ENCODE measurements at regions of chr1 and their contacts with region 1.

Region 1: DNA sequence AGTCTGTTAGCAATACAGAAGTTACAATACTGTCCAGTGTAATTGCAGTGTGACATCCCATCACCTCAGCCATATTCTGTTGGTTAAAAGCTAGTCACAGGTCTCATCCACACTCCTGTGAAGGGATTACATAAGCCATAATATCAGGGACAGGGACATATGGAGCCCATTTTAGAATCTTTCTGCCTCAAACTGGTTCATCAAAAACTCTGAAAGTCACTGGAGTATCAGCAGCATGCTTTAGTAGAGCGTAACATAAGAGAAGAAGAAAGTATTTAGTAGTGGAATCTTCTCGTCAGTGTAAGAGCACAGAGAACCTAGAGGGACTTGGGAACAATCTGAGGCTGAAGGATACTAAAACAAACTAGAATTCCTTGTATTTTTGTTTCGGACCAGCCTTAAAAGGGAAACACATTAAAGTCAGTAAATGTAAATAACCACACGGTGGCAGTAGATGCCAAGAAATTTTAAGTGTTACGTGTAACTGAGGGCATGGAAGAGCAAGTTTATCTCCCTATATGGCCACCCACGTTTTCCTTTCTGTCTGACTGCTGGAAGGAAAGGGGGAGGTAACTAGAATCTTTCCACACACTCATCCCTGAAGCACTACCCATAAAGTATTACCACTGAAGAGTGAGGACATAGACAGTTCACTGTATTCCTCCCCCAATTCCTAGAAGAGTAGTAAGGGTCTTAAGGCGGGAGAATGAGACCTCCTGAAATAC is 41.6 kb upstream of the AGL start:
- DNase-seq: no peak

Region 2: GRCh38 chr1:100127226-100127625 is 318.7 kb after region 1 on chr1:
- intact Hi-C with region 1: loop called in 1 of 2 experiments (anchors 5 kb)
- DNase-seq: no peak